ENCODE measurements at regions of chr2 and their contacts with region 1.

Region 1: DNA sequence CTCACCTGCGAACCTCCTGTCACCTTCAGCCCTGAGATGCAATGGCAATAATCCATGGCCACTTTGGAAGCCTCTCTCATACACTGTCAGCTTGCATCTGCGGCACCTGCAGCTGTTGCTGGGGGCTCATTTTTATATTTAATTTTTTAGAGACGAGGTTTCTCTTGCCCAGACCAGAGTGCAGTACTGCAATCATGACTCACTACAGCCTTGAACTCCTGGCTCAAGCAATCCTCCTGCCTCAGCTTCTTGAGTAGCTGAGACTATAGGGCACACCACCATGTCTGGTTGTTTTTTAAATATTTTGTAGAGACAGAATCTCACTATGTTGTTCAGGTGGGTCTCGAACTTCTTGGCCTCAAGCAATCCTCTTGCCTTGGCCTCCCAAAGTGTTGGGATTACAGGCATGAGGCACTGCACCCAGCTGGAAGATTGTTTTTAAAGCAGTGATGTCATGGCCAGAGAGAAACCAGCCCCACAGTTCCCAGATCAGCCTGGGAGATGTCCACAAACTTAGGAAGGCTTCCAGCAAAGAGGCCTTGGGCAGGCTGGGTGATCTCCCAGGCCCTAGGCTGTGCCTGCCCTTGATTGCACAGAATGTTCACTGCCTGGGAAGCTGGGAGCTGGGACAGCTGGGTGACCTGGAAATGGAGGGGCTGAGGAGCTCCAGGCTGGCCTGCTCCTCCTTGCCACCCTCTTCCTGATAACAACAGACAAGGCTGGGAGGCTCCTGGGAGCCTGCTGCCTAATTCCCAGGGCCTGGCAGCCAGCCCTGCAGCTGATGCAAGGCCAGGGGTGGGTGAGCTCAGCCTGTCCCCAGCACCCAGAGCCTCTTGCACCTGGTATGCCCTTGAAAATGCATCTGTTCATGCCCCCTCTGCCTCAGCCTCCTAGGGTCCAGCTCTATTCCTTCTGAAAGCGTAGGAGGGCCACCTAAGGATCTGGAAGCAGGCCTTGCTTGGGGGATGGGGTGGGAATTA is 27.1 kb downstream of the SH2D6 start:
- DNase-seq: peak in 1 of 2 donors; percentile 57
- ATAC-seq: peak; percentile 26 to 81 (median 78)
- H3K4me3 ChIP-seq: no peak overlapping the region
- H3K27ac ChIP-seq: peak overlapping the region; percentile 18 to 76 (median 66)
- H3K4me1 ChIP-seq: peaks cover 0 to 28% (median 12%) of the 10 kb centered on the region in 9 donors
- H3K27me3 ChIP-seq: no peaks in the 10 kb centered on the region
- CTCF ChIP-seq: no peak

Region 2: DNA sequence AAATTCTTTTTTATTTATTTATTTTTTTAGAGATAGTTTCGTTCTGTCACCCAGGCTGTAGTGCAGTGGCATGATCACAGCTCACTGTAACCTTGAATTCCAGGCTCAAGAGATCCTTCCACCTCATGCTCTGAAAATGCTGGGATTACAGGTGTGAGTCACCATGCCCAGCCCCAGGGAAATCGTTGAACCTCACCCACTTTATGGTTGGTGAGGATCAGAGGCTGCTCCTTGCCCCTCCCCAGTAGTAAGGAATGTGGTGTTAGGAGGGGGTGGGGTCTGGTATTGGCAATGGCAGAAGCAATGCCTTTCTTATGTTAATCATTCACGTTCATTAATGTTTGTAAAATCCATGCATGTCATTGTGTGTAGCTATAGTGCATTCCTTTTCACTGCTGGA is 1148.5 kb before region 1 on chr2:
- intact Hi-C with region 1: no loop called
- DNase-seq: no peak
- ATAC-seq: no peak
- H3K4me3 ChIP-seq: no peak overlapping the region
- H3K27ac ChIP-seq: no peak overlapping the region
- H3K4me1 ChIP-seq: no peaks in the 10 kb centered on the region
- H3K27me3 ChIP-seq: peaks cover 0 to 6% (median 0%) of the 10 kb centered on the region in 7 donors
- CTCF ChIP-seq: no peak

Region 3: DNA sequence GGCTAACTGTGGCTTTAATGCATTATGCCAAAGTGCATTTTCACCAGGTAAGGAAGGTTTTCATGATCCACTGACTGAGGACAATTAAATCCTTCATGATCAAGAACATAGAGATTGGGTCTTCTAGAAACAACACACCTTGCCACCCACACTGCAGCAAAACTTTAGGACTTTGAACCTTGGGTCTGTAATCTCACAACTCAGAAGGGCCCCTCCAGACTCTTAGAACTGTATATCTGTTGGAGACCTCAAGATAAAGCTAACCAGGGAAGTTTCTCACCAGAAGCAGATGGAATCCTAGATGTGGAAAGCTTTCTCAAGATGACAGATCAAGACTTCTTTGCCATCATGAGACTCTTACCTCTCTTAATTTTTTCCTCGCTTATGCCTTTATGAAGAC is 50.8 kb after region 1 on chr2:
- intact Hi-C with region 1: loop called in 1 of 10 experiments (anchors 5 kb)
- DNase-seq: no peak
- ATAC-seq: no peak
- H3K4me3 ChIP-seq: no peak overlapping the region
- H3K27ac ChIP-seq: no peak overlapping the region
- H3K4me1 ChIP-seq: peaks cover 0 to 38% (median 23%) of the 10 kb centered on the region in 9 donors
- H3K27me3 ChIP-seq: no peaks in the 10 kb centered on the region
- CTCF ChIP-seq: no peak

Measured in heart right ventricle (tissue), 16 donors.